ENCODE measurements at regions of chr5 and their contacts with region 1.

Region 1: GRCh38 chr5:1763548-1763911 is 36.1 kb downstream of the MRPL36 start:
- DNase-seq: peak in 4 of 5 donors; percentile 22 to 55 (median 34)
- ATAC-seq: peak in 3 of 4 donors; percentile 57 to 84 (median 71)
- H3K4me3 ChIP-seq: no peak overlapping the region
- H3K27ac ChIP-seq: no peak overlapping the region
- H3K4me1 ChIP-seq: no peaks in the 10 kb centered on the region
- H3K27me3 ChIP-seq: peaks cover 0 to 42% (median 0%) of the 10 kb centered on the region in 9 donors
- CTCF ChIP-seq: peak; percentile 57 to 79 (median 67)
- POLR2A ChIP-seq: no peak

Region 2: GRCh38 chr5:1310118-1310517 is 453.4 kb before region 1 on chr5:
- intact Hi-C with region 1: no loop called
- DNase-seq: no peak
- ATAC-seq: no peak
- H3K4me3 ChIP-seq: no peak overlapping the region
- H3K27ac ChIP-seq: no peak overlapping the region
- H3K4me1 ChIP-seq: peaks cover 0 to 24% (median 0%) of the 10 kb centered on the region in 12 donors
- H3K27me3 ChIP-seq: peaks cover 0 to 29% (median 0%) of the 10 kb centered on the region in 9 donors
- CTCF ChIP-seq: no peak
- POLR2A ChIP-seq: no peak

Region 3: GRCh38 chr5:2038321-2039179 is 275.0 kb after region 1 on chr5:
- intact Hi-C with region 1: loop called (anchors 2 to 10 kb)
- DNase-seq: peak; percentile 59 to 86 (median 73)
- ATAC-seq: peak; percentile 87 to 99 (median 94)
- H3K4me3 ChIP-seq: peak overlapping the region; percentile 34 to 67 (median 56)
- H3K27ac ChIP-seq: no peak overlapping the region
- H3K4me1 ChIP-seq: peaks cover 0 to 14% (median 3%) of the 10 kb centered on the region in 12 donors
- H3K27me3 ChIP-seq: peaks cover 0 to 10% (median 0%) of the 10 kb centered on the region in 9 donors
- CTCF ChIP-seq: peak; percentile 63 to 84 (median 72)
- POLR2A ChIP-seq: no peak

Region 4: GRCh38 chr5:2044041-2044440 is 280.5 kb after region 1 on chr5:
- intact Hi-C with region 1: loop called (anchors 2 to 10 kb)
- DNase-seq: no peak
- ATAC-seq: no peak
- H3K4me3 ChIP-seq: no peak overlapping the region
- H3K27ac ChIP-seq: no peak overlapping the region
- H3K4me1 ChIP-seq: peaks cover 0 to 4% (median 0%) of the 10 kb centered on the region in 12 donors
- H3K27me3 ChIP-seq: no peaks in the 10 kb centered on the region
- CTCF ChIP-seq: no peak
- POLR2A ChIP-seq: no peak

Region 5: DNA sequence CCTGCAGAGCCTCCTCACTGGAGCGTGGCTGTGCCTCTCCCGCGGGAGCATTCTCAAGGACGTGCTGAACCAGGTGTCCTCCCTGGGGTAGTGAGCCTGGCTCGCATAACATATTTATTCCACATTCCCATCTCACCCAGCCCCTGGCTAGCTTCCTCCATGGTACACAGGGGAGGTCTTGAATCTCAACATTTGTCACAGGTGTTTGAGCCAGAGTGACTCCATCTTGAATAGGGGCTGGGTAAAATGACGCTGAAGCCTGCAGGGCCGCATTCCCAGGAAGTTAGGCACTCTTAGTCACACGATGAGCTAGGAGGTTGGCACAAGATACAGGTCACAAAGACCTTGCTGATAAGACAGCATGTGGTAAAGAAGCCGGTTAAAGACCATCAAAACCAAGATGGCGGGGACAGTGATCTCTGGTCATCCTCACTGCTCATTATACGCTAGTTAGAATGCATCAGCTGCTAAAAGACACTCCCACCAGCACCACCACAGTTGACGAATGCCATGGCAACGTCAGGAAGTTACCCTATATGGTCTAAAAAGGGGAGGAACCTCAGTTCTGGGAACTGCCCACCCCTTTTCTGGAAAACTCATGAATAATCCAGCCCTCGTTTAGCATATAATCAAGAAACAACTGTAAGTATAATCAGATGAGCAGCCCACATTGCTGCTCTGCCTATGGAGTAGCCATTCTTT is 393.0 kb after region 1 on chr5:
- intact Hi-C with region 1: loop called in 3 of 10 experiments (anchors 5 to 10 kb)
- DNase-seq: no peak
- ATAC-seq: no peak
- H3K4me3 ChIP-seq: no peak overlapping the region
- H3K27ac ChIP-seq: no peak overlapping the region
- H3K4me1 ChIP-seq: no peaks in the 10 kb centered on the region
- H3K27me3 ChIP-seq: no peaks in the 10 kb centered on the region
- CTCF ChIP-seq: no peak
- POLR2A ChIP-seq: no peak

Region 6: GRCh38 chr5:3602785-3603502 is 1839.4 kb after region 1 on chr5:
- intact Hi-C with region 1: loop called in 1 of 10 experiments (anchors 10 kb)
- DNase-seq: peak in 4 of 5 donors; percentile 29 to 55 (median 50)
- ATAC-seq: peak; percentile 48 to 88 (median 78)
- H3K4me3 ChIP-seq: peak overlapping the region in 6 of 12 donors; percentile 5 to 21 (median 11)
- H3K27ac ChIP-seq: no peak overlapping the region
- H3K4me1 ChIP-seq: peaks cover 0 to 36% (median 5%) of the 10 kb centered on the region in 12 donors
- H3K27me3 ChIP-seq: peaks cover 37 to 98% (median 87%) of the 10 kb centered on the region in 9 donors
- CTCF ChIP-seq: peak; percentile 35 to 70 (median 60)
- POLR2A ChIP-seq: no peak